Heart right ventricle (tissue), 16 donors: ENCODE measurements at regions of chr12 and their contacts with region 1.

Region 1: GRCh38 chr12:80412369-80412953 is 31.6 kb upstream of the PTPRQ start:
- DNase-seq: peak in 1 of 2 donors; percentile 8
- ATAC-seq: peak in 2 of 8 donors; percentile 50 to 58
- H3K4me3 ChIP-seq: no peak overlapping the region
- H3K27ac ChIP-seq: no peak overlapping the region
- H3K4me1 ChIP-seq: no peaks in the 10 kb centered on the region
- H3K27me3 ChIP-seq: peaks cover 0 to 3% (median 0%) of the 10 kb centered on the region in 7 donors
- CTCF ChIP-seq: peak; percentile 56 to 84 (median 75)

Region 2: DNA sequence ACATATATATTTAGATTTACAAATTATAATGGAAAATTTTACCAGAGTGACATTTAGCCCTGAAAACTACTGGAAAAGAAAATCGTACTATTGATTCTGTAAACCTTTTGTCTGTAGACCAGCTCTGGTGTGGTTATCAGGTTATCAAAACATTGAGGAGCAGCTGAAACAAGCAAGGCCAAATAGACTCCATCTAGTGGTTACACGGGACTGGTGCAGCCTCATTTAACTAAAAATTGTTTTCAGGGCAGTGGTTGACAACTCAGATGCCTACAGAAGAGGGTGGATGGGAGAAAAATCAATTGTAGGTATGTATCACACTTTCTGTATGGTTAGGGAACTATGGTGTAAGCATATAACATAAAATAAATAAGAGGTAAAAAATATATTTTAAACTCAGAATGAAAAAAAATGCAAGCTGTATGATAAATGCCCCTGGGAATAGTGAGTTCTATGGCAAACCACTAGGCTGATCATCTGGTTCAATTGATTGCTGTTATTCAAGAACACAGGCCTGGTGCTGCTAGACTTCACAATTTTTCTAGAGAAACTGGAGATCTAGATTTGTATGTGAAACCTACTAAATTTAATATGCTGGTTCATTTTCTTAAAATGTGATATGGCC is 716.6 kb after region 1 on chr12:
- intact Hi-C with region 1: loop called in 1 of 10 experiments (anchors 10 kb)
- DNase-seq: peak in 1 of 2 donors; percentile 7
- ATAC-seq: peak in 3 of 8 donors; percentile 38 to 49 (median 44)
- H3K4me3 ChIP-seq: no peak overlapping the region
- H3K27ac ChIP-seq: no peak overlapping the region
- H3K4me1 ChIP-seq: peaks cover 0 to 4% (median 0%) of the 10 kb centered on the region in 9 donors
- H3K27me3 ChIP-seq: no peaks in the 10 kb centered on the region
- CTCF ChIP-seq: peak in 8 of 9 donors; percentile 62 to 72 (median 66)